ENCODE measurements at regions of chr20 and their contacts with region 1.

Region 1: DNA sequence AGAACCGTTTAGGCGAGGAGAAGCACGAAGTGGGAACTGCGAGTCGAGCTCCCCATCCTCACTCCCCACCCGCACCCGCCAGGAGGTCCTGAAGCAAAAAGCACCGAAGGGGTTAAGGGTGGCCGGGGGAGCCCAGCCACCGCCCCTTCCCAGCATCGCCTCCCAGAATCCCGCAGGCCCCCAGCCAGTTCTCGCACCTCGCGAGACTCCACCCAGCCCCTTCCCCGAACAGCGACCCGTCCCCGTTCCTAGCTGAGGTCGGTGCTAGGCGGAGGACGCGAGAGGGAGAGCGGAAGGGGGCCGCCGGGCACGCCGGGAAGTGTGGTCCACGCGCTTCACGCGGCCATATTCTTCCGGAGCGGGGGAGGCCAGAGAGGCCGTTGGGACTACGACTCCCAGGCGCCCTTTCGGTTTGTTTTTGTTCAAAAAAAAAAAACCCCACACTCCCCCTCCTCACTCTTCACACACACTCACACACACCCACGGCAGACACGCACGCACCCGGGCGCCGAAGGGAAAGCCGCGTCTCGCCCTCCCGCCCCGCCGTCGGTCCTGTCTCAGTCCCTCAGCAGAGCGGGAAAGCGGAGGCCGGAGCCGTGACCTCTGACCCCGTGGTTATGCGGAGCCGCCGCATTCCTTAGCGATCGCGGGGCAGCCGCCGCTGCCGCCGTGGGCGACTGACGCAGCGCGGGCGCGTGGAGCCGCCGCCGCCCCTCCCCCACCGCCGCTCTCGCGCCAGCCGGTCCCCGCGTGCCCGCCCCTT is at the start of gene ASXL1:
- DNase-seq: peak; percentile 96 to 97
- ATAC-seq: peak; percentile 90 to 91
- H3K4me3 ChIP-seq: peak within 1 kb of the TSS; percentile 75 to 98 (median 90)
- H3K27ac ChIP-seq: peak within 1 kb of the TSS; percentile 97 to 99 (median 98)
- H3K4me1 ChIP-seq: peaks cover 31 to 37% of the 10 kb centered on the region in 2 donors
- H3K27me3 ChIP-seq: no peaks in the 10 kb centered on the region
- CTCF ChIP-seq: no peak
- POLR2A ChIP-seq: peak; percentile 28 to 39
- total RNA-seq, gene ASXL1: 21.8 to 36.6 (median 28.4) TPM

Region 2: GRCh38 chr20:31806564-31807355 is 551.3 kb before region 1 on chr20:
- in situ Hi-C with region 1: no loop called
- intact Hi-C with region 1: loop called (anchors 5 kb)
- DNase-seq: peak; percentile 76 to 90
- ATAC-seq: peak; percentile 90 to 95
- H3K4me3 ChIP-seq: no peak overlapping the region
- H3K27ac ChIP-seq: peak overlapping the region; percentile 89 to 95 (median 93)
- H3K4me1 ChIP-seq: peaks cover 52 to 53% of the 10 kb centered on the region in 2 donors
- H3K27me3 ChIP-seq: no peaks in the 10 kb centered on the region
- CTCF ChIP-seq: no peak
- POLR2A ChIP-seq: no peak

Region 3: DNA sequence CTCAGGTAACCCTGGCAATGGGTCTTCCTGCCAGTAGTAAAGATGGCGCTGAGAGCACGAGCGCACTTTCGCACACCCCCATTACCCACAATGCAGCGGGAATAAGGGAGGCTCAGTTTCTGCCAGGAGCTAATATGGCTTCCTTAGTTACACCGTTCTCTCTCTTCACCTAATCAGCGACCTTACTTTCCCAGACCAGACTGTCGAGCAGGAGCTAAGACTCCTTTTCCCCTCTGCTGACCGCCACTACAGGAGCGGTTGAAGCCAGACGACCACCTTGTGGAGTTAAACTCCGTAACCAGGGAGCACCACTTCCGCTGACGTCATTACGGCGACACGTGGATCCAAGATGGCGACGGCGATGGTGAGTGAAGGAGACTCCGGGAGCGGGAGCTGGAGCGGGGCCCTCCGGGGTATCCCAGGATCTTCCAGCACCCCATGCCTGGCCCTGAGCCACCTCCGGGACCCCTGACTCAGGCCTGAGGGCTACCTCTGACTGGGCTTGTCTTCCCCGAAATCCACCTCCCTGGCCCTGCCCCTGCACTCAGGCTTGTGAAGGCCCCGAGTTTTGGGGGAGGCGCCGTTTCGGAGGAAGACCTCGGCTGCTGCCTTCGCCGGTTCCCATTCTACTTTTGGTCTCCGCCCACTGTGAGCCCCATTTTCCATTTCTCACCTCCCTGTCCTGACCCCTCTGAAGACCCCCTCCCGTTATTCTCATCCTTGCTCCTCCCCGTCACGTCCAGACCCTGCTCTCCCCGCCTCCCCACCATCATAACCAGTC is 248.5 kb before region 1 on chr20 and contains the start of gene TM9SF4:
- in situ Hi-C with region 1: no loop called
- intact Hi-C with region 1: loop called (anchors 1 kb)
- DNase-seq: peak; percentile 85
- ATAC-seq: peak; percentile 97 to 99
- H3K4me3 ChIP-seq: peak within 1 kb of the TSS; percentile 94 to 100 (median 96)
- H3K27ac ChIP-seq: peak within 1 kb of the TSS; percentile 98 to 100 (median 99)
- H3K4me1 ChIP-seq: peaks cover 17 to 30% of the 10 kb centered on the region in 2 donors
- H3K27me3 ChIP-seq: no peaks in the 10 kb centered on the region
- CTCF ChIP-seq: no peak
- POLR2A ChIP-seq: peak; percentile 57 to 62
- total RNA-seq, gene TM9SF4: 18.0 to 22.9 (median 21.0) TPM

Region 4: DNA sequence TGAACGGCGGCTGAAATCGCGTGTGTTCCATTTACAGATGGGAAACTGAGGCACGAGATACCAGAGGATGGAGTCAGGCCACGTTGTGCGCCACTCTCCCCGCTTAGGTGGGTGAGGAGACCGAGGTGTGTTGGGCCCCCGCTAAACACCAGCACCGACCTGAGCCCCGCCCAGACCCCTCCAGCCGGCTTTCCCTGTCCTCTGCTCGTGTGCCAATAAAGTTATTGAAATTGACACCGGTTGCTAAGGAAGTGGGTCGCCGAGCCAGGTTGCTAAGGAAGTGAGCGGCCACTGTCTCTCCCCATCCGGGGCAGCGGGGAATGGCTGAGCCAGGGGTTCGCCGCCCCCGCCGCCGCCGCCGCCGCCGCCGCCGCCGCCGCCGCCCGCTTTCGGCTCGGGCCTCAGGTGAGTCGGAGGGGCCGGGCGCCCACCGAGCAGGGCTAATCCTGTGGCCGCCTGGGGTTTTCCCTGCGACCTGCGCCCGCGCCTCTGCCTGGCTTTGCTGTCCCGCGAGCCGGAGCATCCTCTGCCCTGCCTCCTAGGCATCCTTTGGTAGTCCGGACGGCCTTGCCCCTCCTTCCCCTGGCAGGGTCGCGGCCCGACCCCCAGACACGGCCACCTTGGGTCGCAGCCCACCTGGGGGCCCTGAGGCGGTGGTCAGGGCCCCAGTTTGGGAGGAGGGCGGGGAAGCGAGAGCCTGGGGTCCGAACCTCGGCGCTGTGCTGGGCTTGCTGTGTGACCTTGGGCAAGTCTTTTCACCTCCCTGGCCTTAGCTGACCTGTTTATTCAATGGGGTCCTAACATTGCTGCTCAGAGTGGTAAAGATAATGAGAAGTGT is 80.5 kb before region 1 on chr20 and contains the start of gene KIF3B:
- in situ Hi-C with region 1: no loop called
- intact Hi-C with region 1: loop called (anchors 2 kb)
- DNase-seq: peak; percentile 79 to 83
- ATAC-seq: peak; percentile 97 to 99
- H3K4me3 ChIP-seq: peak within 1 kb of the TSS; percentile 79 to 96 (median 86)
- H3K27ac ChIP-seq: peak within 1 kb of the TSS; percentile 20 to 74 (median 63)
- H3K4me1 ChIP-seq: peaks cover 12 to 17% of the 10 kb centered on the region in 2 donors
- H3K27me3 ChIP-seq: no peaks in the 10 kb centered on the region
- CTCF ChIP-seq: no peak
- POLR2A ChIP-seq: peak; percentile 27 to 42
- total RNA-seq, gene KIF3B: 4.8 to 8.7 (median 6.4) TPM

Region 5: DNA sequence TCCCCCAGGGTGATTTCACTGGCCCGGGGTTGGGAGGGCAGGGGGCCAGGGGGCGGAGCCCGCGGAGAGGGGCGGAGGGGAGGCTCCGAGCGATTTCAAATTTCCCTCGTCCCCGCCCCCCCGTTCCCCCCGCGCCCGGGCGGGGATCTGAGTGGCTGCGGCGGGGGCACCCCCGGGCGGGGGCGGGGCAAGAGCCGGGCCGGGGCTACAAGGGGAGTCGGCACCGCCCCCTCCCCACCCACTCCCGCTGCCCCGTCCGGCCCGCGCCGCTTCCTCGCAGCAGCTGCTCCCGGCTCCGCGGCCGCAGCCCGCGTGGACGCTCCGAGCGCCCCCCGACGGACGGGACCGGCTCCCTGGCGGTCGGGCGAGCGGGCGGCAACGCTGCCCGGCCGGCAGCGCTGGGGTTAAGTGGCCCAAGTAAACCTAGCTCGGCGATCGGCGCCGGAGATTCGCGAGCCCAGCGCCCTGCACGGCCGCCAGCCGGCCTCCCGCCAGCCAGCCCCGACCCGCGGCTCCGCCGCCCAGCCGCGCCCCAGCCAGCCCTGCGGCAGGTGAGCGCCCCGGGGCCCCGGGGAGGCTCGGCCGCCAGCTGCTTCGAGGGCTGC is 404.2 kb after region 1 on chr20 and contains the start of gene DNMT3B:
- in situ Hi-C with region 1: no loop called
- intact Hi-C with region 1: loop called (anchors 1 kb)
- DNase-seq: peak; percentile 38 to 52
- ATAC-seq: peak; percentile 84
- H3K4me3 ChIP-seq: peak within 1 kb of the TSS; percentile 68 to 89 (median 76)
- H3K27ac ChIP-seq: peak within 1 kb of the TSS in 1 of 4 donors; percentile 37
- H3K4me1 ChIP-seq: peaks cover 9% of the 10 kb centered on the region in 2 donors
- H3K27me3 ChIP-seq: no peaks in the 10 kb centered on the region
- CTCF ChIP-seq: peak in 3 of 5 experiments; percentile 6 to 31 (median 21)
- POLR2A ChIP-seq: no peak
- total RNA-seq, gene DNMT3B: 0.20 to 0.39 (median 0.30) TPM

Region 6: DNA sequence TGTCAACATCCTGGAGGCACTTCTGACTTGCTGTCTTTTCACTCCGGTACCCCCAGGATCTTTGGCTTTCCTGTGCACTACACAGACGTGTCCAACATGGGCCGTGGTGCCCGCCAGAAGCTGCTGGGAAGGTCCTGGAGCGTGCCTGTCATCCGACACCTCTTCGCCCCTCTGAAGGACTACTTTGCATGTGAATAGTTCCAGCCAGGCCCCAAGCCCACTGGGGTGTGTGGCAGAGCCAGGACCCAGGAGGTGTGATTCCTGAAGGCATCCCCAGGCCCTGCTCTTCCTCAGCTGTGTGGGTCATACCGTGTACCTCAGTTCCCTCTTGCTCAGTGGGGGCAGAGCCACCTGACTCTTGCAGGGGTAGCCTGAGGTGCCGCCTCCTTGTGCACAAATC is 449.7 kb after region 1 on chr20:
- in situ Hi-C with region 1: no loop called
- intact Hi-C with region 1: no loop called
- DNase-seq: no peak
- ATAC-seq: no peak
- H3K4me3 ChIP-seq: no peak overlapping the region
- H3K27ac ChIP-seq: no peak overlapping the region
- H3K4me1 ChIP-seq: no peaks in the 10 kb centered on the region
- H3K27me3 ChIP-seq: no peaks in the 10 kb centered on the region
- CTCF ChIP-seq: no peak
- POLR2A ChIP-seq: no peak

Measured in gastrocnemius medialis (tissue), 4 donors.